ENCODE measurements at regions of chr16 and their contacts with region 1.

Region 1: DNA sequence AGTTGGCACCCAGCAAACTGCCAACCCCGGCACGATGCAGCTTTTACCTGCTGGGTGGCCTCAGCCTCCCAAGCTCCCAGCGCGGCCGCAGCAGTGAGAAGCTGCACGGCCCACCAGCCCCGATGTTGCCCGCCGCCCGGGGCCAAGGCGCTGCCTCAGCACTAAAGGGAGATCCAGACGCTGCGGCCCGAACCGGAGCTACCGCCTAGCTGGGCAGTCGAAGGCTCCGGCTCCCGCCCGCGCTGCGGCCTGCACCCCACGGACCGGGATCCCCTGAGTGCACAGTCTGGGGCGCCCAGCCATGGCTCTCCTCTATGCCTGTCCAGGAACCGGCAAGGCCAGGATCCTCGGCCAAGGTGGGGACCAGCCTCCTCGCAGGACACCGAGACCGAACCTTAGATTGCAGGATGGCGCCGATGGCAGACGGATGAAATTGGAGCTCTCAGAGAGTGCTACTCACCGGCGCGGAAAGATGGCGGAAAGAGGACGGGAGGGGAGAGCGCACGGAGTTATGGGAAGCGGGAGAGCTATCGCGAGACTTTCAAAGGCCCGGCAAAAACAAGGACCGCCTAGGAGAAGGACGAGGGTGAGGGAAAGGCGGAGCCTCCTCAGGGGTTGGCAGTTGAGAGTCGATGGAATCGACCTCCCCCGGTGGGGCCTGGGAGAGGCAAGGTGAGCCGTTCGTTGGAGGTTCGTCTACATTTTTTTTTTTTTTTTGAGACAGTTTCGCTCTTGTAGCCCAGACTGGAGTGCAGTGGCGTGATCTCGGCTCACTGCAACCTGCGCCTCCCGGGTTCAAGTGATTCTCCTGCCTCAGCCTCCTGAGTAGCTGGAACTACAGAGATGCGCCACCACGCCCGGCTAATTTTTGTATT is at the start of gene RPS15A:
- DNase-seq: peak; percentile 96 to 98
- H3K4me3 ChIP-seq: peak within 1 kb of the TSS; percentile 73
- H3K4me3 Mint-ChIP-seq: peak within 1 kb of the TSS; percentile 97
- H3K27ac Mint-ChIP-seq: peak within 1 kb of the TSS; percentile 97
- H3K4me1 ChIP-seq: peaks cover 19% of the 10 kb centered on the region
- H3K4me1 Mint-ChIP-seq: peaks cover 15% of the 10 kb centered on the region
- H3K27me3 ChIP-seq: no peaks in the 10 kb centered on the region
- H3K27me3 Mint-ChIP-seq: no peaks in the 10 kb centered on the region
- CTCF ChIP-seq: no peak
- total RNA-seq, gene RPS15A: 1,469 and 1,473 TPM in 2 replicates

Region 2: GRCh38 chr16:19521471-19522396 is 731.6 kb after region 1 on chr16 and contains the start of gene GDE1:
- CTCF ChIA-PET with region 1: no interaction called
- POLR2A ChIA-PET with region 1: no interaction called
- intact Hi-C with region 1: loop called (anchors 2 kb)
- DNase-seq: peak; percentile 93 to 95
- H3K4me3 ChIP-seq: peak within 1 kb of the TSS; percentile 82
- H3K4me3 Mint-ChIP-seq: peak within 1 kb of the TSS; percentile 79
- H3K27ac Mint-ChIP-seq: peak within 1 kb of the TSS; percentile 93
- H3K4me1 ChIP-seq: peaks cover 11% of the 10 kb centered on the region; the same call in 1 of the 2 replicates
- H3K4me1 Mint-ChIP-seq: peaks cover 11% of the 10 kb centered on the region
- H3K27me3 ChIP-seq: no peaks in the 10 kb centered on the region
- H3K27me3 Mint-ChIP-seq: no peaks in the 10 kb centered on the region
- CTCF ChIP-seq: peak in 1 of 2 experiments; percentile 57
- total RNA-seq, gene GDE1: 48.2 and 48.7 TPM in 2 replicates

Measured in Caco-2 (cell line).